Activated naive CD4-positive, alpha-beta T cell treated with anti-CD3 and anti-CD28 coated beads, Interleukin-2, amount 10 ng/mL, durations not matched to agents 7 days and 5 days (primary cell): ENCODE measurements at regions of chr19 and their contacts with region 1.

Region 1: DNA sequence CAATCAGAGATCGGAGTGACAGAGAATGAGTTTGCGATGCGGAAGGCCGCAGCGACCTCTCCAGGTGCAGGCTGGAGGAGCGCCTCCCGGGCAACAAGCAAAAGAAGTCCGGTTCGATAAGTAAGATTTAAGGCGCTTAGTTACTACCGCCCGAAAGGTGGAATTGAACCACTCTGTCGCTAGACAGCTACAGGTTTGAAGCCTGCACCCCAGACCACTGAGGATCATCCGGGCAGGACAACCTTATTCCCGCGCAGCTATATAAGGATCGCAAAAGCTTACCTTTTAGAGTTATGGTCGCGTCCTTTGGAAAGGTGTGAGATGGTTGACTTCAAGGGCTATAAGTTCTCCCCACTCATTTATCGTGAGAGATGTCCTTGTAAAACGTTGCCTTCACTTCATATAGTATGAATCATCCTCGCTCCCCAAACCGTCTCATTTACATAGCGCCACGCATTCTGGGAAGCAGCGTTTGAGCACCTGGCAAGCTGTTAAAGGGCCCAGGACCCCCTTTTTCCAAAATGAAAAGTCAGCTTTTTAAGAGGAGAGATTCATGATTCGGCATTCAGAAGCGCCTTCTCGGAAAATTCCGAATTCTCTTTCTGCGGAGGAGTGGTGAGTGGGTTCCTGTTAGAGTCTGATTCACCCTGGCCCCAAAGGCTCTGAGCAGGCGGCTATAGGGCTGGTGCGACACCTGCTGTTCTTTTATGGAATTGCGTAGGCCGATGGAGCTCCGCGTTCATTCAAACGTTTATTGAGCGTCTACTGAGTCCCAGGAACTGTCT is 10.8 kb downstream of the FOSB start:
- DNase-seq: peak; percentile 93
- H3K4me3 Mint-ChIP-seq: peak overlapping the region; percentile 78
- H3K27ac Mint-ChIP-seq: peak overlapping the region; percentile 97
- H3K4me1 Mint-ChIP-seq: peaks cover 39% of the 10 kb centered on the region
- H3K27me3 Mint-ChIP-seq: peaks cover 49% of the 10 kb centered on the region

Region 2: GRCh38 chr19:45404557-45405434 is 73.8 kb before region 1 on chr19 and contains the start of gene PPP1R13L:
- CTCF ChIA-PET with region 1: interaction called, 30 read pairs
- DNase-seq: peak; percentile 86
- H3K4me3 Mint-ChIP-seq: peak within 1 kb of the TSS; percentile 96
- H3K27ac Mint-ChIP-seq: peak within 1 kb of the TSS; percentile 94
- H3K4me1 Mint-ChIP-seq: peaks cover 53% of the 10 kb centered on the region
- H3K27me3 Mint-ChIP-seq: peaks cover 53% of the 10 kb centered on the region

Region 3: DNA sequence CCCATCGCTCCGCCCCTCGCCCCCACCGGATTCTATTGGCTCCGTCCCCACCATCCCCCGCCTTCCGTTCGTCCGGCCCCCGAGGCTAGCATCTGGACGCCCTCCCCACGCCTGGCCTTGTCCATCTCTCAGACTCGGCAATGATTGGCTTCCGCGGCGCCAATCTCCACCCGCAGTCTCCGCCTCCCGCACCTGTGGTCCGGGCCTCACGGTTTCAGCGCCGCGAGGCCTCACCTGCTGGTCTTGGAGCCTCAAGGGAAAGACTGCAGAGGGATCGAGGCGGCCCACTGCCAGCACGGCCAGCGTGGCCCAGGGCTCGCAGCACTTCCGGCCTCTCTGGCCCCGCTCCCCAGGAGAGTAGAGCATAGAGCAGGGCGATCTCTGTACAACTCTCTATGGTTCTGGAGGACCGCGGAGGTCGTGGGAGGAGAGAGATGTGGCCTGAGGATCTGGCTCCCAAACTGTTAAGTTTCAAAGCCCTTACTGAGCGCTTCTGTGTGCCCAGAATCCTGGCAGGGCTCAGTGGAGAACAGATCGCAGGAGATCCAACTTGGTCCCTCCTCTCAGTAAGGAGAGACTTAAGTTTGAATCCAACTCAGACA is 55.0 kb before region 1 on chr19 and contains the start of gene ERCC1:
- CTCF ChIA-PET with region 1: interaction called, 15 read pairs
- DNase-seq: peak; percentile 95
- H3K4me3 Mint-ChIP-seq: peak within 1 kb of the TSS; percentile 94
- H3K27ac Mint-ChIP-seq: peak within 1 kb of the TSS; percentile 97
- H3K4me1 Mint-ChIP-seq: peaks cover 70% of the 10 kb centered on the region
- H3K27me3 Mint-ChIP-seq: peaks cover 22% of the 10 kb centered on the region

Region 4: DNA sequence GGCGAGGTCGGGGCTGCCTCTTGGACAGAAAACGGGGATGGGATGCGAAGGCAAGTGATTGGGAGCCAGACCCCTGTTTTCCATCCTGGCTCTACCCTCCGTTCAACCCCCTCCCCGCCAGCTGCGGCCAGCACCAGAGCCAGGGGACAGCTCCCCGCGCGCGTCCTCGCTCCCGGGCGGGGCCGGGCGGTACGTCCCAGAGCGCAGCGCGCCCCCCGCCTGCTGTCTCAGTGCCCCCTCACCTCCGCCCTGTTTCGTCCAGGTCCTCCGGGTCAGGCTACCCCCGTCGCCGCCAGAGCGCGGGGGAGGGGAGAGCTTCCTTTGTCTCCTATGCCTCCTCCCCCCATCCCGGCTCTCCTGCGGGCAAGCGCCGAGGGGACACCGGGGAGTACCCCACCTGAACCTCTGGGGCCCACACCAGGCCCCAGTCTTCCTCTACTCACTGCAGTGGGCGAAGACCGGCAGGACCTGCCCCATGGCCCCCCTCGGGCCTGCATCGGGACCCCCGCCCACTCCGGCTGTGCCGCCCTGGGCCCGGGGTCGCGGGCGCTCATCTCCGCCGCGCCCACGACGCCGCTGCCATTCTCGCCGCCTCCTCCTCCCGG is 17.8 kb after region 1 on chr19:
- CTCF ChIA-PET with region 1: interaction called, 11 read pairs
- DNase-seq: peak; percentile 71
- H3K4me3 Mint-ChIP-seq: peak overlapping the region; percentile 67
- H3K27ac Mint-ChIP-seq: no peak overlapping the region
- H3K4me1 Mint-ChIP-seq: peaks cover 40% of the 10 kb centered on the region
- H3K27me3 Mint-ChIP-seq: peaks cover 89% of the 10 kb centered on the region

Region 5: DNA sequence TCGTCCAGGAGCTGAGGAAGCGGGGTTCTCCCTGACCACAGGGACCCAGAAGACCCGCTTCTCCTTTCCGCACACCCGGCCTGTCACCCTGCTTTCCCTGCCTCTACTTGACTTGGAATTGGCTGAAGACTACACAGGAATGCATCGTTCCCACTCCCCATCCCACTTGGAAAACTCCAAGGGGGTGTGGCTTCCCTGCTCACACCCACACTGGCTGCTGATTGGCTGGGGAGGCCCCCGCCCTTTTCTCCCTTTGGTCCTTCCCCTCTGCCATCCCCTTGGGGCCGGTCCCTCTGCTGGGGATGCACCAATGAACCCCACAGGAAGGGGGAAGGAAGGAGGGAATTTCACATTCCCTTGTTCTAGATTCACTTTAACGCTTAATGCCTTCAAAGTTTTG is 47.5 kb after region 1 on chr19:
- CTCF ChIA-PET with region 1: no interaction called
- DNase-seq: no peak
- H3K4me3 Mint-ChIP-seq: no peak overlapping the region
- H3K27ac Mint-ChIP-seq: no peak overlapping the region
- H3K4me1 Mint-ChIP-seq: peaks cover 24% of the 10 kb centered on the region
- H3K27me3 Mint-ChIP-seq: peaks cover 21% of the 10 kb centered on the region